ENCODE measurements at regions of chr22 and their contacts with region 1.

Region 1: DNA sequence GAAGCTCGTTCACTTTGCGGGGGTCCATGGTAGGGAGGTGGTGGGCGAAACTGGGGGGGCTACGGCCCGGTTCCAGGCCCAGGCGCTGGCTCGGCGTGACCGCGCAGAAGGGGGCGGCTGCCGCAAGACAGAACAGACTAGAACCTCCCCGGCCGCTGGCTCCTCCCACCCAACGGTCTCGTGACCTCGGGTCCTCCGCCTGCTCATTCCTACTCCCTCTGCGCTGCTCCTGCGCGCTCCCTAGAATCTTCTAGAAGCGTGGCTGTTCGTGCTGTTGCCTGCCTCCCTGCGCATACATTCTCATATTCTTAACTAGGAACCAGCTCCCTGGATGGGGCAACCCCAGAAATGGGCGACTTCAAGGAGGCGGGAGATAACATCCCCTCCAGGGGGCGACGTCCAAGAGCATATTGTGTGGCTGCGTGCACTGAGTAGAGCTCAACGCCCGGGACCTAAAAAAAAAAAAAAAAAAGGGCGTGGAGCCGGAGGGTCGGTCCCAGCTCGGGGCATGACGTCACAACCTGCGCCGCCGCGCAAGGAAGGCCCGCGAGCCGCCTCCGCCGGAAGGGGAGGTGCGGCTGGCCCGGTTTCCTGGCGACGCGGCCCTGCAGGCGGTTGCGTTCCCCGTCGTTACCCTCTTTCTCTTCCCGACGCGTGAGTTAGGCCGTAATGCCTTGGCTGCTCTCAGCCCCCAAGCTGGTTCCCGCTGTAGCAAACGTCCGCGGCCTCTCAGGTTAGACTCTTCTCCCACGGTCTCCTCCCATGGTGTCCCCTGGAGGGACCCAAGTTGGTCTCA is at the starts of genes ST13 and XPNPEP3:
- DNase-seq: peak; percentile 98
- H3K4me3 ChIP-seq: peak within 1 kb of the TSS; percentile 75
- H3K27ac ChIP-seq: peak within 1 kb of the TSS; percentile 98
- H3K4me1 ChIP-seq: peaks cover 15% of the 10 kb centered on the region
- H3K27me3 ChIP-seq: no peaks in the 10 kb centered on the region
- CTCF ChIP-seq: peak; percentile 40
- total RNA-seq, gene ST13: 337 and 365 TPM in 2 replicates
- total RNA-seq, gene XPNPEP3: 30.3 and 31.3 TPM in 2 replicates

Region 2: GRCh38 chr22:40366076-40366475 is 490.6 kb before region 1 on chr22:
- CTCF ChIA-PET with region 1: no interaction called
- POLR2A ChIA-PET with region 1: interaction called, 10 read pairs
- intact Hi-C with region 1: no loop called
- DNase-seq: no peak
- H3K4me3 ChIP-seq: no peak overlapping the region
- H3K27ac ChIP-seq: no peak overlapping the region
- H3K4me1 ChIP-seq: no peaks in the 10 kb centered on the region
- H3K27me3 ChIP-seq: no peaks in the 10 kb centered on the region
- CTCF ChIP-seq: no peak

Region 3: GRCh38 chr22:40396882-40397281 is 459.8 kb before region 1 on chr22:
- CTCF ChIA-PET with region 1: no interaction called
- POLR2A ChIA-PET with region 1: interaction called, 10 read pairs
- intact Hi-C with region 1: no loop called
- DNase-seq: peak; percentile 96
- H3K4me3 ChIP-seq: peak overlapping the region; percentile 14
- H3K27ac ChIP-seq: peak overlapping the region; percentile 83
- H3K4me1 ChIP-seq: peaks cover 57% of the 10 kb centered on the region
- H3K27me3 ChIP-seq: no peaks in the 10 kb centered on the region
- CTCF ChIP-seq: no peak

Region 4: GRCh38 chr22:40818747-40819598 is 37.7 kb before region 1 on chr22 and contains the start of gene SLC25A17:
- CTCF ChIA-PET with region 1: no interaction called
- POLR2A ChIA-PET with region 1: no interaction called
- intact Hi-C with region 1: loop called (anchors 1 kb)
- DNase-seq: peak; percentile 94
- H3K4me3 ChIP-seq: peak within 1 kb of the TSS; percentile 85
- H3K27ac ChIP-seq: peak within 1 kb of the TSS; percentile 87
- H3K4me1 ChIP-seq: peaks cover 15% of the 10 kb centered on the region
- H3K27me3 ChIP-seq: no peaks in the 10 kb centered on the region
- CTCF ChIP-seq: peak; percentile 43
- total RNA-seq, gene SLC25A17: 42.7 and 51.6 TPM in 2 replicates